Dorsolateral prefrontal cortex (tissue), 120 donors: ENCODE measurements at regions of chr2 and their contacts with region 1.

Region 1: GRCh38 chr2:174771631-174772471 is 7.6 kb upstream of the CHRNA1 start:
- DNase-seq: peak; percentile 68 to 90 (median 84)
- H3K4me3 ChIP-seq: peak overlapping the region in 42 of 59 donors; percentile 0 to 55 (median 32)
- H3K27ac ChIP-seq: peak overlapping the region in 56 of 59 donors; percentile 20 to 92 (median 79)
- H3K27me3 ChIP-seq: no peaks in the 10 kb centered on the region
- CTCF ChIP-seq: peak; percentile 69 to 94 (median 88)

Region 2: GRCh38 chr2:174846941-174847938 is 75.4 kb after region 1 on chr2:
- intact Hi-C with region 1: loop called in 1 of 2 experiments (anchors 10 kb)
- DNase-seq: peak in 7 of 10 donors; percentile 39 to 72 (median 56)
- H3K4me3 ChIP-seq: peak overlapping the region; percentile 35 to 79 (median 61)
- H3K27ac ChIP-seq: peak overlapping the region in 58 of 59 donors; percentile 27 to 93 (median 83)
- H3K27me3 ChIP-seq: no peaks in the 10 kb centered on the region
- CTCF ChIP-seq: no peak

Region 3: DNA sequence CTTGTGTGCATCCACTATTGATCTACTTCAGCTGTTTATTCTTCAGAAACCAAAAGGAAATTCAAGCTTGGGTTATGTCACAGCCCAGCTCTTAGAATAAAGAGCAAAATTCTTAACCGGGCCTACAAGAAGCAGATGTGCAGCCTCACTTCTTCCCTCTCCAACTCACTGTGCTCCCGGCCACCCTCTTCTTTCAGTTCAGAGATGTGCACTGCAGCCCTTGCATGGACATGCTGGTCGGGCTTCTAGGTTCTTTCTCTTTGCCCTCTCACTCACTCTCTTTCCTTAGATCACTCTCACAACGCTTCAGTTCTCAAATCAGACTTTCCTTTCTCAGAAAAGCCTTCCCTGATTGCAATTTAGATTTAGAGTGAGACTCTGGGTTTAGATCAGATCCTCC is 129.2 kb after region 1 on chr2:
- intact Hi-C with region 1: loop called in 1 of 2 experiments (anchors 10 kb)
- DNase-seq: peak in 3 of 10 donors; percentile 22 to 45 (median 32)
- H3K4me3 ChIP-seq: peak overlapping the region in 30 of 59 donors; percentile 3 to 46 (median 24)
- H3K27ac ChIP-seq: peak overlapping the region in 58 of 59 donors; percentile 21 to 93 (median 80)
- H3K27me3 ChIP-seq: no peaks in the 10 kb centered on the region
- CTCF ChIP-seq: no peak

Region 4: DNA sequence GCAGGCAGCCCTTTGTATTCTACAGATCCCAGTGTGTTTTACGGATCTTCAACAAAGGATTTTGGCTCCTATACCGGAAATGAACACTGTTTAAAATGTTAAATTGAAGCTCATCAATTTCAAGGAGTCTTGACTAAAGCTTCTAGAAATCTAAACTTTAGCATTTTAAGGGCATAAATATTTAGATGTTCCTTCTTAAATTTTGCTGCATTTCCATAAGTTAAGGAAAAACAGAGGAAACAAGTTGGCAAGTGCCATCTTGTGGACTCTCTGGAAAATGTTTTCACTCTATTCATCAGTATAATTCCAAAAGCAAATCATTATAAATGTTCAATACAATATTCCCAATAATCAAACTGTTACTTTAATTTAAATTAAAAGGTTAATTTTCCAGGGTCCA is 213.8 kb after region 1 on chr2:
- intact Hi-C with region 1: loop called (anchors 1 to 2 kb)
- DNase-seq: no peak
- H3K4me3 ChIP-seq: peak overlapping the region in 48 of 59 donors; percentile 2 to 62 (median 35)
- H3K27ac ChIP-seq: peak overlapping the region in 24 of 59 donors; percentile 2 to 73 (median 31)
- H3K27me3 ChIP-seq: no peaks in the 10 kb centered on the region
- CTCF ChIP-seq: peak; percentile 42 to 86 (median 73)

Region 5: GRCh38 chr2:175017618-175018414 is 246.0 kb after region 1 on chr2:
- intact Hi-C with region 1: no loop called
- DNase-seq: no peak
- H3K4me3 ChIP-seq: no peak overlapping the region
- H3K27ac ChIP-seq: no peak overlapping the region
- H3K27me3 ChIP-seq: no peaks in the 10 kb centered on the region
- CTCF ChIP-seq: no peak

Region 6: GRCh38 chr2:175097297-175097696 is 325.4 kb after region 1 on chr2:
- intact Hi-C with region 1: no loop called
- DNase-seq: no peak
- H3K4me3 ChIP-seq: no peak overlapping the region
- H3K27ac ChIP-seq: no peak overlapping the region
- H3K27me3 ChIP-seq: no peaks in the 10 kb centered on the region
- CTCF ChIP-seq: no peak